ENCODE measurements at regions of chr3 and their contacts with region 1.

Region 1: GRCh38 chr3:32934150-32934742 is 17.2 kb upstream of the CCR4 start:
- DNase-seq: peak; percentile 34 to 62
- H3K4me3 ChIP-seq: no peak overlapping the region
- H3K27ac ChIP-seq: no peak overlapping the region
- H3K4me1 ChIP-seq: no peaks in the 10 kb centered on the region
- H3K27me3 ChIP-seq: no peaks in the 10 kb centered on the region
- CTCF ChIP-seq: peak in 5 of 7 experiments; percentile 33 to 65 (median 60)
- EP300 ChIP-seq: no peak
- POLR2A ChIP-seq: no peak

Region 2: GRCh38 chr3:32522682-32523081 is 411.6 kb before region 1 on chr3:
- intact Hi-C with region 1: no loop called
- DNase-seq: no peak
- H3K4me3 ChIP-seq: no peak overlapping the region
- H3K27ac ChIP-seq: no peak overlapping the region
- H3K4me1 ChIP-seq: no peaks in the 10 kb centered on the region
- H3K27me3 ChIP-seq: no peaks in the 10 kb centered on the region
- CTCF ChIP-seq: no peak
- EP300 ChIP-seq: no peak
- POLR2A ChIP-seq: no peak

Region 3: GRCh38 chr3:32733631-32734229 is 200.5 kb before region 1 on chr3:
- intact Hi-C with region 1: loop called (anchors 10 kb)
- DNase-seq: peak in 1 of 2 donors; percentile 63
- H3K4me3 ChIP-seq: no peak overlapping the region
- H3K27ac ChIP-seq: no peak overlapping the region
- H3K4me1 ChIP-seq: no peaks in the 10 kb centered on the region
- H3K27me3 ChIP-seq: no peaks in the 10 kb centered on the region
- CTCF ChIP-seq: peak in 4 of 7 experiments; percentile 36 to 55 (median 46)
- EP300 ChIP-seq: no peak
- POLR2A ChIP-seq: no peak

Region 4: DNA sequence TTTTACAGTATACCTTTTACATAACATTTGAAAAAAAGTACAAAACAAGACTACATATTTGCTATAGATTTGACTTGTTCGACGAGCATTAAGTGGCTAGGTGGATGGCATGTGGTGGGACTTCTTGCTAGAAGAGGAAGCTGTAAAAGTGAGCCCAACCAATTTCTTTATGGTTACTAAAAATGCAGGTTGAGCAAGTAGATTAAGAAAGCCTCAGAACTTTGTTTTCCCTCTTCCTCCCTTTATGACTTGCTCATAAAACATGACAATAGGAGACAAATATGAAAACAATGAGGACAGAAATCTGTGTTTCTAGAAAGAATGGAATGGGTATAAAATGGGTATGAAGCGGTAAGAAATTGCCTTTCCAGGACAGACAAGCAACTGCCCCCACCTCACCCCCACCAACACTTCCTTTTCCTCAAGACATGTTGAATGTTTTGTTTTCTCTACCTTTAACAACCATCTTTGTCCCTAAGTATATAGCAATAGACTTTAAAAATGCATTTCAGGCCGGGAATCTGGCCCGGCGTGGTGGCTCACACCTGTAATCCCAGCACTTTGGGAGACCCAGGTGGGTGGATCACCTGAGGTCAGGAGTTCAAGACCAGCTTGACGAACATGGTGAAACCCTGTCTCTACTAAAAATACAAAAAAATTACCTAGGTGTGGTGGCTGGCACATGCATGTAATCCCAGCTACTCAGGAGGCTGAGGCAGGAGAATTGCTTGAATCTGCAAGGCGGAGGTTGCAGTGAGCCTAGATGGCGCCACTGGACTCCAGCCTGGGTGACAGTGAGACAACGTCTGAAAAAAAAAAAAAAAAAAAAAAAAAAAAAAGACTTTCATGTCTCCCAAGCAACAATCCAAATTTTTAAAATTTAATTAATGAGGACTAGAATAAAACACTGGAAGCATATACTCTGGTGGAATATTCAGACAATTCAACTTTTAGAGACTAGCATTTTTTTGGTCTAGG is 32.5 kb before region 1 on chr3:
- intact Hi-C with region 1: no loop called
- DNase-seq: peak; percentile 35 to 52
- H3K4me3 ChIP-seq: no peak overlapping the region
- H3K27ac ChIP-seq: no peak overlapping the region
- H3K4me1 ChIP-seq: peaks cover 0 to 10% (median 3%) of the 10 kb centered on the region in 4 donors
- H3K27me3 ChIP-seq: no peaks in the 10 kb centered on the region
- CTCF ChIP-seq: no peak
- EP300 ChIP-seq: no peak
- POLR2A ChIP-seq: no peak

Region 5: GRCh38 chr3:33113772-33114621 is 179.8 kb after region 1 on chr3 and contains the start of gene CRTAP:
- intact Hi-C with region 1: no loop called
- DNase-seq: peak; percentile 98
- H3K4me3 ChIP-seq: peak within 1 kb of the TSS; percentile 67 to 78 (median 76)
- H3K27ac ChIP-seq: peak within 1 kb of the TSS; percentile 93 to 99 (median 97)
- H3K4me1 ChIP-seq: peaks cover 11 to 51% (median 32%) of the 10 kb centered on the region in 4 donors
- H3K27me3 ChIP-seq: no peaks in the 10 kb centered on the region
- CTCF ChIP-seq: no peak
- EP300 ChIP-seq: no peak
- POLR2A ChIP-seq: no peak
- total RNA-seq, gene CRTAP: 65.8 to 284 (median 106) TPM